Transverse colon (tissue), 4 donors: ENCODE measurements at regions of chr4 and their contacts with region 1.

Region 1: DNA sequence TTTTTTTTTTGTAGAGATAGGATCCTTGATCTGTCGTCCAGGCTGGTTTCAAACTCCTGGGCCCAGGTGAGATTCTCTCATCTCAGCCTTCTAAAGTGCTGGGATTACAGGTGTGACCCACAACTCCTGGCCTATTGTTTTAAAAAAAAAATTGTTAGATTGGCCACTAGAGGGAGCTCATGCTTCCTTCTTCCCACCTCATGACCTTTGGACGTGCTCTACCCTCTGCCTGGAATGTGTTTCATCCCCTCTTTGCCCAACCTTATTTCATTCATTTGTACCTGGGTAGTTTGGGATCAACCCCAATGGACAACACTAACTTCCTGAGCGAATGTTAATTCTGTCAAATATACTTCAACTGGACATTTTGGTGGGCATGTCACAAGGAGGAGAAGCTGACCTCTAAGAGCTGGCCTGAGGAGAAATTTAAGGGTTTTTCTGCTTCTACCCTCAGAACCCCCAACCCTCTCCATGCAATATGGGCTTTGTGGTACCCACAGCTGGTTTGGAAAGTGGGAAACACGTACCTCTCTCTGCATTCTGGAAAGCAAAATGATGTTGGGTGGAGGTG is 6.4 kb downstream of the PPEF2 start:
- DNase-seq: no peak
- H3K4me3 ChIP-seq: no peak overlapping the region
- H3K27ac ChIP-seq: no peak overlapping the region
- H3K4me1 ChIP-seq: no peaks in the 10 kb centered on the region
- H3K27me3 ChIP-seq: no peaks in the 10 kb centered on the region
- CTCF ChIP-seq: peak; percentile 59 to 69 (median 65)
- EP300 ChIP-seq: no peak
- POLR2A ChIP-seq: no peak

Region 2: GRCh38 chr4:76087007-76087769 is 191.4 kb after region 1 on chr4:
- in situ Hi-C with region 1: loop called in 1 of 4 experiments (anchors 25 kb)
- intact Hi-C with region 1: no loop called
- DNase-seq: peak; percentile 37
- H3K4me3 ChIP-seq: no peak overlapping the region
- H3K27ac ChIP-seq: no peak overlapping the region
- H3K4me1 ChIP-seq: no peaks in the 10 kb centered on the region
- H3K27me3 ChIP-seq: no peaks in the 10 kb centered on the region
- CTCF ChIP-seq: peak in 4 of 5 experiments; percentile 43 to 57 (median 46)
- EP300 ChIP-seq: no peak
- POLR2A ChIP-seq: no peak